B cell (primary cell): ENCODE measurements at regions of chr11 and their contacts with region 1.

Region 1: DNA sequence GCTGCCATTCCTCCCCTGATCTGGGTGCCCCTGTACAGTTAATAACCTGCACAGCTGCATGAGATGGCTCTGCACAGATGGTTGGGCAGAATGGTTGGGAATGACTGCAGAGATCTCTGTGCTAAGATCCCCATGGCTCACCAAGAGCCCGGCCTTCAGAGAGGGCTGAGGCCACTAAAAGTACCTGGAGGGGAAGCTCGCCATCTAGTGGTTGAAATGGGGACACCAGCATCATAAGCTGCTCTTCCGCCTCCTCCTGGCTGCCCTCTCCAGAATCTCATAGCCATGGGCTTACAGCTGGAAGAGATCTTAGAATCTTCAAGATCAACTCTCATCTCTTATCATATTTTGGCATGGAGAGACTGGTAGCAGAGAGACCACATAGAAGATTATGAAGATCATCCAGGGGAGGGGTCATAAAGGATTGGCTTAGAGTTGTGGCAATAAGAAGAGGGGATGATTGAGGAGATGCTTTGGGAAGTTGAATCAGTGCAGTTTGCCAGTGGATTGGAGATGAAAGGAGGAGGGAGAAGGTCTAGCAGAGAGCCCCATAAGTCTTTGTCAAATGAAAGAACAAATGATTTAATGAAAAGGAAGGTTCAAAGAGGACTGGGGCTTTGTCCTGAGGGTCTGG is 22.0 kb upstream of the TLCD5 start:
- DNase-seq: peak; percentile 72
- ATAC-seq: peak; percentile 60
- H3K4me3 ChIP-seq: no peak overlapping the region
- H3K4me3 Mint-ChIP-seq: no peak overlapping the region
- H3K27ac ChIP-seq: no peak overlapping the region
- H3K27ac Mint-ChIP-seq: no peak overlapping the region
- H3K4me1 ChIP-seq: no peaks in the 10 kb centered on the region
- H3K4me1 Mint-ChIP-seq: no peaks in the 10 kb centered on the region
- H3K27me3 ChIP-seq: peaks cover 0 to 16% (median 3%) of the 10 kb centered on the region in 4 experiments
- H3K27me3 Mint-ChIP-seq: peaks cover 26% of the 10 kb centered on the region
- CTCF ChIP-seq: peak; percentile 95

Region 2: DNA sequence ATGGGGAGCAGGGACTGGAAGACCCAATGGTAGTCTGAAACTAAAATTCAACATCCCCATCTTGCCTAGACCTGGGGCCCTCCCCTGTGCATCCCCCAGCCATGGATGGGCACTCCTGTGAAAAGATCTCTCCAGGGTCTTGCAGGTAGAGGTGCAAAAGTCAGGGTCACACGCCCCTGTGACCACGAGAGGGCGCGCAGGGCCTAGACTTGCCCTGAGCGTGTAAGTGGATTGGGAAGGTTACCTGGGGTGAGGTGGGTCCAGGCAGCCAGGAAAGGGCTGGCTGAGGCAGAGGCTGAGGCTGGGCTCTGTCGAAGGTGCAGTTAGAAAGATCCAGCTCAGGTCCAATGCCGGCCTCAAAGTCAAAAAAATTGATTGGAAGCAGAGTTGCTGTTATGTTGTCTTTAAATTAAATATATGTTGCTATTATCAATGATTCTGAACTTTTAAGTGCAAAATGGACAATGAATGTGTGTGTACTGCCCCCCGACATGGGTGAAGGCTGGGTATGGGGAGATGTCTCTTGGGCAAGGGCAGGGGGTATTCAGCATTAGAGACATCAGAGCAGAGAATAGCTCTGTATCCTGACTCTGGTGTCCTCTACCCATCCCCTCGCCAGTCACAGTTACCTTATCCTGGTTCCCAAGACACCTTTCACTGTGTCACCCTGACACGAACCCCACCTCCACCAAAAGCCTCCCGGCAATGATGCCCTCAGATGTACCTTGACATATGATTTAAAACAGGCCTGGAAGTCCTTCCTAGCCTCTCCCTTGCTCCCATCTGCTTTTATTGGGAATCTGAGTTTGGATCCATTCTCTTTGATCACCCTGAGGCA is 67.9 kb before region 1 on chr11:
- CTCF ChIA-PET with region 1: interaction called, 14 read pairs
- POLR2A ChIA-PET with region 1: no interaction called
- intact Hi-C with region 1: loop called (anchors 2 kb)
- DNase-seq: peak; percentile 44
- ATAC-seq: no peak
- H3K4me3 ChIP-seq: no peak overlapping the region
- H3K4me3 Mint-ChIP-seq: no peak overlapping the region
- H3K27ac ChIP-seq: no peak overlapping the region
- H3K27ac Mint-ChIP-seq: no peak overlapping the region
- H3K4me1 ChIP-seq: no peaks in the 10 kb centered on the region
- H3K4me1 Mint-ChIP-seq: no peaks in the 10 kb centered on the region
- H3K27me3 ChIP-seq: peaks cover 0 to 34% (median 4%) of the 10 kb centered on the region in 4 experiments
- H3K27me3 Mint-ChIP-seq: peaks cover 46% of the 10 kb centered on the region
- CTCF ChIP-seq: peak; percentile 65

Region 3: DNA sequence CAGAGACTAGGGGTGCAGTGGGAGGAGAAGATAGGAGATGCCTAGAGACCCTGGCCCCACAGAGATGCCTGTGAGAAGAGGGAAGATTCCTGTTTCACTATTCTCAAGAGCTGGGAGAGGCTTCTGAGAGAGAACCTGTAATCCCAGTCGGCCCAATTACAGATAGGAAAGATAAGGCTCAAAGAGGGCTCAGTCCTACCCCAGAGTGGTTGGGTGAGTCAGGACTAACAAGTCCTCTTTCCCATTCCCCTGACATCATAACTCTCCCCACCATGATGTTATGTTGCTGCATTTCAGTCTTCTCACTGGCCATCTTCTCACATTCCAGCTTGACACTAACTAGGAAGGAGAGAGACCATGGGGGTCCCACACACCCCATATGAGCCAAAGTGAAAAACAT is 50.9 kb after region 1 on chr11:
- CTCF ChIA-PET with region 1: no interaction called
- POLR2A ChIA-PET with region 1: no interaction called
- intact Hi-C with region 1: no loop called
- DNase-seq: no peak
- ATAC-seq: no peak
- H3K4me3 ChIP-seq: no peak overlapping the region
- H3K4me3 Mint-ChIP-seq: no peak overlapping the region
- H3K27ac ChIP-seq: no peak overlapping the region
- H3K27ac Mint-ChIP-seq: no peak overlapping the region
- H3K4me1 ChIP-seq: no peaks in the 10 kb centered on the region
- H3K4me1 Mint-ChIP-seq: no peaks in the 10 kb centered on the region
- H3K27me3 ChIP-seq: peaks cover 0 to 47% (median 31%) of the 10 kb centered on the region in 4 experiments
- H3K27me3 Mint-ChIP-seq: peaks cover 49% of the 10 kb centered on the region
- CTCF ChIP-seq: no peak